ENCODE measurements at regions of chr16 and their contacts with region 1.

Region 1: DNA sequence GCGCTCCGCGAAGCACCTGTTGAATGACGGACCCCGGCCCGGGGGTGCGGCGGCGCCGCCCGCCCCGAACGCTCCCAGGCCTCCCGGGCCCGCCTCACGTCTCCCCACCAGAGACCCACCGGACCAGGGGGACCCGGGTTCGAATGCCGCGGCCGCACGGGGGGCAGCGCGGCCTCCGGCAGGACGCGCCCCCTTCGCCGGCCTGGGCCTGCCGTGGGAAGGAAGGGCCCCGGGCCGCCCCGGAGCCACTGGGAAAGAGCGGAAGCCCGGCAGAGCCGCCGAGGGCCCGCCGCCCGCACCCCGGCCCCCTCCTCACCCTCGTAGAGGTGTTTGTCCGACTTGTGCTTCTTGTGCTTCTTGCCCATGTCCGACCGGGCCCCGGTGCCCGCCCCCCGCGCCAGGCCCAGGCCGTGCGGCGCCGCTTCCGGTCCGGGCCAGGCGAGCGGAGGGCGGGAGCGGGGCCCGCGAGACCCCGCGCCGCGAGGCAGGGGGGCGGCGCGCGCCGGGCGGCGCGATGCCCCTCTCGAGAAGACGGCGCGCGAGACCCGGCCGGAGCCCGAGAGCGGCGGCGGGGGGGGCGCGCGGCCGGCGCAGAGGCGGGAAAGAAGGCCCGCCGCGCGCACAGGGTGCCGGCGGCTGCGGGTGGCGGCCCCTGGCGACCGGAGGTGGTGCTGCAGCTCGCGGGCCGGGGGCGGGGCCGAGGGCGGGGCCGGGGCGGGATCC is at the start of gene BRD7:
- DNase-seq: peak; percentile 42
- H3K4me3 ChIP-seq: peak within 1 kb of the TSS; percentile 60 to 83 (median 76)
- H3K27ac ChIP-seq: peak within 1 kb of the TSS; percentile 75
- H3K4me1 ChIP-seq: peaks cover 17% of the 10 kb centered on the region
- H3K27me3 ChIP-seq: no peaks in the 10 kb centered on the region
- CTCF ChIP-seq: peak in 1 of 2 donors; percentile 39
- total RNA-seq, gene BRD7: 22.3 to 69.7 TPM

Region 2: GRCh38 chr16:50065624-50066481 is 302.7 kb before region 1 on chr16 and contains the start of gene HEATR3:
- CTCF ChIA-PET with region 1: no interaction called
- dilution Hi-C with region 1: no loop called
- in situ Hi-C with region 1: loop called in 1 of 2 experiments (anchors 25 kb)
- intact Hi-C with region 1: no loop called
- DNase-seq: peak; percentile 84
- H3K4me3 ChIP-seq: peak within 1 kb of the TSS; percentile 87 to 100 (median 99)
- H3K27ac ChIP-seq: peak within 1 kb of the TSS; percentile 65
- H3K4me1 ChIP-seq: peaks cover 15% of the 10 kb centered on the region
- H3K27me3 ChIP-seq: no peaks in the 10 kb centered on the region
- CTCF ChIP-seq: no peak
- total RNA-seq, gene HEATR3: 18.7 to 23.8 TPM

Region 3: GRCh38 chr16:50245417-50246298 is 122.9 kb before region 1 on chr16:
- CTCF ChIA-PET with region 1: interaction called, 8 read pairs
- dilution Hi-C with region 1: no loop called
- in situ Hi-C with region 1: no loop called
- intact Hi-C with region 1: loop called (anchors 10 kb)
- DNase-seq: peak; percentile 87
- H3K4me3 ChIP-seq: peak overlapping the region; percentile 56 to 69 (median 57)
- H3K27ac ChIP-seq: peak overlapping the region; percentile 66
- H3K4me1 ChIP-seq: peaks cover 11% of the 10 kb centered on the region
- H3K27me3 ChIP-seq: no peaks in the 10 kb centered on the region
- CTCF ChIP-seq: no peak

Region 4: DNA sequence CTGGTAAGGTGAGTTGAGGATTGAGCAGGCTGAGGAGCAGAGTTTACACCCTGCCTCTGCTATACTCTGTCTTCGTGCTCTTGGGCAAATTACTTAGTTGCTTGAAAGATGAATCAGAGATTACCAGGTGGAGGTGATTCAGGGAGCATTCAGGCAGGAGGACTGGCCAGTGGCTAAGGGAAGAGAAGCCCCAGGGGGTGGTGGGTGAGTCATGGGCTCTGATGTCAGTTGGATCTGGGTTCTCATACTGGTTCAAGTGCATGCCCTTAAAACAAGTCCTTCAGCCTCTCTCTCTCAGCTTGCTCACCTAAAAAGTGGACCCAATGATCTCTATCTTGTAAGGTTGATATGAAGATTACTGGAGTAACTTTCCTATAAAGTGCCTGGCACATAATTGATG is 28.6 kb after region 1 on chr16:
- CTCF ChIA-PET with region 1: no interaction called
- dilution Hi-C with region 1: no loop called
- in situ Hi-C with region 1: no loop called
- intact Hi-C with region 1: no loop called
- DNase-seq: peak; percentile 99
- H3K4me3 ChIP-seq: no peak overlapping the region
- H3K27ac ChIP-seq: peak overlapping the region; percentile 75
- H3K4me1 ChIP-seq: peaks cover 22% of the 10 kb centered on the region
- H3K27me3 ChIP-seq: no peaks in the 10 kb centered on the region
- CTCF ChIP-seq: no peak

Region 5: DNA sequence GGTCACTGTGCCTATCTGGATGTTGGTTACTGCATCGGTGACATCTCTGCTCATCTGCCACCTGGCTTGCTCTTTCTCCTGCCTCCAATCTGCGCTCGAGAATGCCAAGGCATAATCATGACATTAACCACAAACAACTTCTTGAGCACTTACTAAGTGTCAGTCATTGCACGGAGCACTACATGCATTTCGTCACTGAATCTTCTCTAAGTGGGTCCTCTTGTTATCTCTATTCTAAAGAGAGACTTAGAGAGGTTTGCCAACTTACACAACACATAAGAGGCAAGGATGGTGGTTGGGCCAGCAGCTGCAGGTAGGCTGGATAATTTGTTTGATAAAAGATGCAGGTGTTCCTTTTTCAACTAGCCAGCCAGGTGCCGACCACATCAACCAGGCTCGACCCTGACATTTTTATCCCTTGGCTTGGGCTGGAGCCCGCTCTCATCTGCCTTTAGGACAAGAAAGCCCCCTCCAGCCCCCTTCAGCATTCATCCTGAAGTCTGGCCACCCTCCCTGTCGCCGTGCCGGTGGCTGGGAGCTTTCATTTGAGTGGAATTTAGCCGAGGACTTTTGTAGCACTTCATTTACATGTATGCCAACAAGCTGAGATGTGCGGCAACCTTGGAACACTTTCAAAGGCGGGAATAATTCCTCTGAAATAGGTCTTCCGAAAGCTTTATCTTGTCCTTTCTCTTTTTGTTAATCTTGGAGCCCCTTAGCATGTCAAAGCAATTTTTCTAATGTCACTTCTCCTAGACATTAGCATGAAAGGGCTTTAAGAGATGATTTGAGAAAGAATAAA is 90.3 kb after region 1 on chr16:
- CTCF ChIA-PET with region 1: no interaction called
- dilution Hi-C with region 1: no loop called
- in situ Hi-C with region 1: no loop called
- intact Hi-C with region 1: loop called (anchors 10 kb)
- DNase-seq: no peak
- H3K4me3 ChIP-seq: no peak overlapping the region
- H3K27ac ChIP-seq: no peak overlapping the region
- H3K4me1 ChIP-seq: peaks cover 3% of the 10 kb centered on the region
- H3K27me3 ChIP-seq: no peaks in the 10 kb centered on the region
- CTCF ChIP-seq: no peak

Region 6: DNA sequence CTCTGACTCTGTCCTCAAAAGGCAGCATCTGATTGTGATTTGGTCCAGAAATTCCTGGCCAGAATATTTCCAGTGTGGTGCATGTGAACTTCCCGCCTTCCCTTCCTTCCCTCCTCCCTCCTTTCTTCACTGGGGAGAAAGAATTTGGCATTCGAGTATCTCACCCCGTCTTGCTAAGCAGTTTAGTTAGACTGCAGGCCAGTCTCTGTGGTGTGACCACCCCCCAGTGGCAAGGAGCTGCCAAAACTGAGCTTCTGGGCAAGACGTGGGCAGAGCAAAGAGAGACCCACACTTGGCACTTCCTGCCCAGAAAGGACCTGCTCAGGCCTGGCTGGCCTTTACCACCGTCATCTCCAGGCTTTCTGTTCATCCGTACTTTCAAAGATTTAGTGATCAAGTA is 276.2 kb after region 1 on chr16:
- CTCF ChIA-PET with region 1: no interaction called
- dilution Hi-C with region 1: no loop called
- in situ Hi-C with region 1: no loop called
- intact Hi-C with region 1: no loop called
- DNase-seq: peak; percentile 23
- H3K4me3 ChIP-seq: no peak overlapping the region
- H3K27ac ChIP-seq: no peak overlapping the region
- H3K4me1 ChIP-seq: no peaks in the 10 kb centered on the region
- H3K27me3 ChIP-seq: no peaks in the 10 kb centered on the region
- CTCF ChIP-seq: peak; percentile 32 to 64

Region 7: GRCh38 chr16:50741808-50742575 is 373.4 kb after region 1 on chr16 and contains the start of gene CYLD:
- CTCF ChIA-PET with region 1: no interaction called
- dilution Hi-C with region 1: no loop called
- in situ Hi-C with region 1: loop called in 1 of 2 experiments (anchors 10 kb)
- intact Hi-C with region 1: loop called (anchors 5 kb)
- DNase-seq: peak; percentile 100
- H3K4me3 ChIP-seq: peak within 1 kb of the TSS; percentile 75 to 86 (median 79)
- H3K27ac ChIP-seq: peak within 1 kb of the TSS; percentile 83
- H3K4me1 ChIP-seq: peaks cover 28% of the 10 kb centered on the region
- H3K27me3 ChIP-seq: no peaks in the 10 kb centered on the region
- CTCF ChIP-seq: no peak
- total RNA-seq, gene CYLD: 39.3 to 52.3 TPM

Region 8: GRCh38 chr16:50747207-50747956 is 378.8 kb after region 1 on chr16:
- CTCF ChIA-PET with region 1: no interaction called
- dilution Hi-C with region 1: no loop called
- in situ Hi-C with region 1: loop called in 1 of 2 experiments (anchors 10 kb)
- intact Hi-C with region 1: loop called (anchors 5 kb)
- DNase-seq: peak; percentile 34
- H3K4me3 ChIP-seq: no peak overlapping the region
- H3K27ac ChIP-seq: no peak overlapping the region
- H3K4me1 ChIP-seq: peaks cover 22% of the 10 kb centered on the region
- H3K27me3 ChIP-seq: no peaks in the 10 kb centered on the region
- CTCF ChIP-seq: peak; percentile 23 to 45

Measured in mammary epithelial cell (primary cell).